Heart left ventricle (tissue), 16 donors: ENCODE measurements at regions of chr11 and their contacts with region 1.

Region 1: GRCh38 chr11:16613512-16614381 is 124.7 kb upstream of the C11orf58 start:
- DNase-seq: peak; percentile 88 to 94 (median 91)
- ATAC-seq: peak; percentile 96 to 98 (median 97)
- H3K4me3 ChIP-seq: peak overlapping the region; percentile 21 to 69 (median 56)
- H3K27ac ChIP-seq: peak overlapping the region; percentile 49 to 90 (median 82)
- H3K4me1 ChIP-seq: peaks cover 0 to 26% (median 8%) of the 10 kb centered on the region in 12 donors
- H3K27me3 ChIP-seq: peaks cover 0 to 78% (median 5%) of the 10 kb centered on the region in 9 donors
- CTCF ChIP-seq: peak; percentile 83 to 97 (median 91)
- POLR2A ChIP-seq: no peak

Region 2: GRCh38 chr11:15327786-15328231 is 1285.9 kb before region 1 on chr11:
- intact Hi-C with region 1: loop called (anchors 2 to 10 kb)
- DNase-seq: peak; percentile 53 to 64 (median 58)
- ATAC-seq: peak; percentile 76 to 89 (median 84)
- H3K4me3 ChIP-seq: no peak overlapping the region
- H3K27ac ChIP-seq: no peak overlapping the region
- H3K4me1 ChIP-seq: no peaks in the 10 kb centered on the region
- H3K27me3 ChIP-seq: no peaks in the 10 kb centered on the region
- CTCF ChIP-seq: peak; percentile 43 to 76 (median 67)
- POLR2A ChIP-seq: no peak

Region 3: DNA sequence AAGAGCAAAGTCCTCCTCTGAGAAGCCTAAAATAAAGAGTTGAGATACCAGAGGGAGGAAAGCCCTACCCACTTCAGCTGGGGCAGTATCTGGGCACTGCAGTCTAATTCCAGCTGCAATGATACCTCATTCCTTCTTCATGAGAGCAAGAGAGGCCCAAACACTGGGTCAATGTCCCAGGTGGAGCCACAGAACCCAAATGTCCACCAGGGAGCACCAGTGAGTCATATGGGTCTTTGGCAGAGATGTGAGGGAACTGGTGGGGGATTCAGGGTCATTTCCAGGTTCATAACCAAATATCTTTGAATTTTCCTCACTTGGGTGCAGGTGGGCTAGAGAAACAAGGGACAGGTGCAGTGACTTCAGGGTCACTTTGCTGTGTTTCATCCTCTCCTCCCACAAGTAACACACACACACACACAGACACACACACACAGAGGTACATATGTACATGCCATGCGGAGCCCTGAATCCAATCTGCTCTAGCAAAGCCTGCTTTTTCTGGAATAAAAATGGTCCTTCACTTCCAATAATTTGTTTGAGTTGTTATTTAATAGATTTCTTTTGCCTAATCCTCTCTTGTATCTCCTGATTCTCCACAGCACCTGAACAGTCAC is 842.8 kb before region 1 on chr11:
- intact Hi-C with region 1: loop called in 6 of 10 experiments (anchors 2 to 5 kb)
- DNase-seq: peak in 4 of 5 donors; percentile 29 to 47 (median 36)
- ATAC-seq: peak in 1 of 4 donors; percentile 60
- H3K4me3 ChIP-seq: no peak overlapping the region
- H3K27ac ChIP-seq: no peak overlapping the region
- H3K4me1 ChIP-seq: peaks cover 0 to 21% (median 10%) of the 10 kb centered on the region in 12 donors
- H3K27me3 ChIP-seq: no peaks in the 10 kb centered on the region
- CTCF ChIP-seq: peak; percentile 36 to 76 (median 60)
- POLR2A ChIP-seq: no peak

Region 4: GRCh38 chr11:15826826-15827225 is 786.9 kb before region 1 on chr11:
- intact Hi-C with region 1: loop called in 5 of 10 experiments (anchors 5 to 10 kb)
- DNase-seq: peak in 4 of 5 donors; percentile 35 to 80 (median 44)
- ATAC-seq: peak in 2 of 4 donors; percentile 61 to 71
- H3K4me3 ChIP-seq: no peak overlapping the region
- H3K27ac ChIP-seq: peak overlapping the region in 1 of 12 donors; percentile 62
- H3K4me1 ChIP-seq: peaks cover 0 to 61% (median 30%) of the 10 kb centered on the region in 12 donors
- H3K27me3 ChIP-seq: no peaks in the 10 kb centered on the region
- CTCF ChIP-seq: peak; percentile 53 to 77 (median 62)
- POLR2A ChIP-seq: no peak

Region 5: GRCh38 chr11:15901054-15901453 is 712.7 kb before region 1 on chr11:
- intact Hi-C with region 1: loop called in 2 of 10 experiments (anchors 5 kb)
- DNase-seq: peak in 3 of 5 donors; percentile 29 to 56 (median 53)
- ATAC-seq: peak; percentile 59 to 88 (median 83)
- H3K4me3 ChIP-seq: no peak overlapping the region
- H3K27ac ChIP-seq: no peak overlapping the region
- H3K4me1 ChIP-seq: peaks cover 0 to 12% (median 7%) of the 10 kb centered on the region in 12 donors
- H3K27me3 ChIP-seq: no peaks in the 10 kb centered on the region
- CTCF ChIP-seq: peak; percentile 8 to 57 (median 44)
- POLR2A ChIP-seq: no peak

Region 6: GRCh38 chr11:16713594-16713993 is 99.8 kb after region 1 on chr11:
- intact Hi-C with region 1: no loop called
- DNase-seq: no peak
- ATAC-seq: no peak
- H3K4me3 ChIP-seq: no peak overlapping the region
- H3K27ac ChIP-seq: no peak overlapping the region
- H3K4me1 ChIP-seq: no peaks in the 10 kb centered on the region
- H3K27me3 ChIP-seq: no peaks in the 10 kb centered on the region
- CTCF ChIP-seq: no peak
- POLR2A ChIP-seq: no peak